ENCODE measurements at regions of chr17 and their contacts with region 1.

Region 1: GRCh38 chr17:75793460-75793859 is 8.9 kb downstream of the UNK start:
- DNase-seq: no peak
- H3K4me3 ChIP-seq: no peak overlapping the region
- H3K4me3 Mint-ChIP-seq: no peak overlapping the region
- H3K27ac ChIP-seq: peak overlapping the region in 1 of 2 donors; percentile 27
- H3K27ac Mint-ChIP-seq: peak overlapping the region in 1 of 7 donors; percentile 21
- H3K4me1 ChIP-seq: no peaks in the 10 kb centered on the region
- H3K4me1 Mint-ChIP-seq: no peaks in the 10 kb centered on the region
- H3K27me3 ChIP-seq: no peaks in the 10 kb centered on the region
- H3K27me3 Mint-ChIP-seq: no peaks in the 10 kb centered on the region
- CTCF ChIP-seq: no peak

Region 2: DNA sequence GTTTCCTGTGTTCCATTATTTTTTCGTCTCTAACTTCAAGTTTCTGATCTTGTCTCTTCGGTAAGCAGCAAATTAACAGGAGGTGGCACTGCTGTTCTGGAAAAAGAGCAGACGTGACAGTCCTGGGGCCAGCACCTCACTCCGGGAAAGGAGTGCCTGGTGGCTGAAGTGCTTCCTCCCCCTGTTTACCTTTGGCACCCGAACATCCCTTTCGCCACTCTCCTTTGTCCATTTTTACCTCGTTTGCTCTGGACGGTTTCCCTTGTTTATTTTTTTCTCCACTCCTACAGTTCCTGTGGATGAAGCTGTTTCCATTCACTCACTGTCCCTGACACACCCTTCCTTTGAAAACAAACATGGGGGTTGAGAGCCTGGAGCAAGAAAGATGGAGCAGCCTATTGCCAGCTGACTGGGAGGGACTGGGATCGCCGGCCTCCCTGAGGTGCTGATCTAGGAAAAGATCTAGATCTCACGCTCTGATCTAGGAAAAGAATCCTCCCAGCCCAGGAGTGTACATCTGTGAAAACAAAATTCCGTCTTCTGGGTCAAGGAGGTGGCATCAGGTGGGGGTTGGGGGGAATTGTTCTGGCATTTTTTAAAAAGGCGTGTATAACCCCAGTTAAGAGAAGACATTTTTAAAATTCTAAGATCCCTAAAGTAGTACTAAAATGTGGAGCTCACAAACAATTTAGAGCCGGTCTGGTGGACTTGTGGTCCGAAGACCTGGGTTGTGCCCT is 113.6 kb before region 1 on chr17:
- intact Hi-C with region 1: no loop called
- DNase-seq: no peak
- H3K4me3 ChIP-seq: no peak overlapping the region
- H3K4me3 Mint-ChIP-seq: no peak overlapping the region
- H3K27ac ChIP-seq: no peak overlapping the region
- H3K27ac Mint-ChIP-seq: peak overlapping the region in 2 of 7 donors; percentile 4 to 70
- H3K4me1 ChIP-seq: peaks cover 4 to 5% of the 10 kb centered on the region in 2 donors
- H3K4me1 Mint-ChIP-seq: peaks cover 10% of the 10 kb centered on the region
- H3K27me3 ChIP-seq: no peaks in the 10 kb centered on the region
- H3K27me3 Mint-ChIP-seq: no peaks in the 10 kb centered on the region
- CTCF ChIP-seq: no peak

Region 3: GRCh38 chr17:75778945-75779230 is 14.6 kb before region 1 on chr17:
- intact Hi-C with region 1: no loop called
- DNase-seq: peak in 1 of 3 donors; percentile 33
- H3K4me3 ChIP-seq: peak overlapping the region; percentile 67 to 99 (median 96)
- H3K4me3 Mint-ChIP-seq: peak overlapping the region; percentile 93 to 99
- H3K27ac ChIP-seq: peak overlapping the region; percentile 93 to 95
- H3K27ac Mint-ChIP-seq: peak overlapping the region; percentile 79 to 99 (median 90)
- H3K4me1 ChIP-seq: peaks cover 41 to 54% of the 10 kb centered on the region in 2 donors
- H3K4me1 Mint-ChIP-seq: peaks cover 40% of the 10 kb centered on the region
- H3K27me3 ChIP-seq: no peaks in the 10 kb centered on the region
- H3K27me3 Mint-ChIP-seq: peaks cover 0 to 2% (median 1%) of the 10 kb centered on the region in 3 donors
- CTCF ChIP-seq: peak; percentile 49

Region 4: DNA sequence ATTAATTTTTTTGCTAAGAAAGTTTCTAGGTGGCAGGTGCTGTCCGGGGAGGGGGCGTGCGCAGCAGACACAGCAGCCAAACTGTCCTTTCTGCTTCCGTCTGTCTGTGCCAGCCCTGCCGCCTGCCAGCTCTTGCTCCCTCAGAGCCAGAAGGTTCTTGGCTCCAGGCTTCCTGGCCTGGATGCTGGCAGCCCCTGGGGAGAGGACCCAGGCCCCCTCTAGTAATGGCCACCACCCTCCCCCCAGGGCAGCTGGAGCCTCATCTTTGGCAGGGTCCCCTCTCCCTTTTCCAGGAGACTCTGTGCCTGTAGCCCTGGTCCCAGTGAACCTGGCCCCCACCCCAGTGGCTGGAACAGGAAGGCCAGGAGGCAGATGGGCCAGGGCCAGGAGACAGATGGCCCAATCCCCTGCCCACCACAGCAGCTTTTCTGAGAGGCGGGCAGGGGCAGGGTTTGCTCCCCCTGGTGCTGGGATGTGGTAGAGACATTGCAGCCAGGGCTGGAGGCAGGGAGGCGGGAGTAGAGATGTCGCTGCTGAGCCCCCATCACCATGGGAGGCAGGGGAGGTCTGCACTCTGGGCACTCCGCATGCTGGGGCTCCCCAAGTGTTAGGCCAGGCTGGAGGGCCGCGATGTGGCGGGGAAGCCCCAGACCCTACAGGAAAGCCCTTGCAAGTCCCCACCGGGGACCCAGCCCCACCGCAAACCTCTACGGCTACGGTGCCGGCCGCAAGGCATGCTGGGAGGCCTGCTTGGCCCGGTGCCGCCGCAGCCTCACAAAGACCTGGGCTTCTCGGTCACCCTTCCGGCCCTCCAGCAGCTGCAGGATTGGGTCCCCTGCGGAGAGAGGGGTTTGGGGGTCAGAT is 34.0 kb after region 1 on chr17:
- intact Hi-C with region 1: loop called in 1 of 2 experiments (anchors 5 kb)
- DNase-seq: peak; percentile 19 to 43 (median 42)
- H3K4me3 ChIP-seq: no peak overlapping the region
- H3K4me3 Mint-ChIP-seq: peak overlapping the region in 1 of 2 donors; percentile 39
- H3K27ac ChIP-seq: peak overlapping the region in 1 of 2 donors; percentile 41
- H3K27ac Mint-ChIP-seq: peak overlapping the region in 4 of 7 donors; percentile 27 to 77 (median 32)
- H3K4me1 ChIP-seq: peaks cover 5 to 10% of the 10 kb centered on the region in 2 donors
- H3K4me1 Mint-ChIP-seq: peaks cover 14% of the 10 kb centered on the region
- H3K27me3 ChIP-seq: no peaks in the 10 kb centered on the region
- H3K27me3 Mint-ChIP-seq: no peaks in the 10 kb centered on the region
- CTCF ChIP-seq: peak; percentile 78

Measured in CD14-positive monocyte (primary cell).